ENCODE measurements at regions of chr16 and their contacts with region 1.

Region 1: GRCh38 chr16:88452482-88453216 is 431 bp upstream of the ZFPM1 start:
- DNase-seq: peak; percentile 96
- H3K4me3 ChIP-seq: peak overlapping the region; percentile 68
- H3K27ac ChIP-seq: peak overlapping the region; percentile 42
- H3K4me1 ChIP-seq: peaks cover 56% of the 10 kb centered on the region
- CTCF ChIP-seq: no peak

Region 2: DNA sequence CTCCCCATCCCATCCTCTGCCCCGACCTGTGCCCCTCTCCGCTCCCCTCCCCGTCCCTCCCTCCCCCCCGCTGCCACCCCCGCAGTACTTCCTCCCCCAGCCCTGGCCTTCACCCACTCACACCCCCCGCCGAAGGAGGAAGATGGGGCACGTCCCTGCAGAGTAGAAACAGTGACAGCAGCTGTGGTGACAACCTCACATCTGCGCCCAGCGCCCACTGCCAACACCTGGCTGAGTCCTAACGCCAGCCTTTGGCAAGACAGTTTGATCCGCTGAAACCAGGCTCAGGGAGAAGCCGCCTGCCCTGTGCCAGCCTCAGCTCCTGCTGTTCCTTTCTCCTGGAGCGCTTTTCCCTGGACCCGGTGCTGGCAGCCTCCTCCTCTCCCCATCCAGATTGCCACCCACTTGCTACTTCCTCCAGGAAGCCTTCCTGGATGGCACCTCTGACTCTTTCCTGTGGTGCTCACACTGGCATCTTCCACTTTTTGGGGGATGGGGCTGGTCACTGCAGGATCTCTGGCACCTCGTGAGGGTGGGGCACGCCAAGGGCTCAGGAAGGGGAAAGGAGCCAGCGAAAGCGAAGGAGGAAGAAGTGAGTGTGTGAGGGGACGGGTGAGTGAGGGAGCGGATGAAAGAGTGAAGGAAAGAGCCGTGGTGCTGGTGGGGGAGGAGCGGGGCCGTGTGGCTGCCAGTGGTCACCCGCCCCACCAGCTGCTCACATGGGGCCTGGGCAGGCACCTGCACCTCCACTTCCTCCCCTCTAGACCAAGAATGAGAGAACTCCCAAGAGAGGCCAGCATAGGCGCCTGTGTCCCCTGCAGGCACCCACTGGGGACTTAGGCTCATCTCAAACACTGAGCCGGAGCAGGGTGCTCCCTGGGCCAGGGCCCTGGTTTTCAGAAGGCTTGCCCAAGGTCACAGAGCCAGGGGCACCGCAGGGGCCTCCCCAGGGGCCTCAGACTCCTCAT is 27.4 kb after region 1 on chr16:
- CTCF ChIA-PET with region 1: interaction called, 3 read pairs
- POLR2A ChIA-PET with region 1: interaction called, 4 read pairs
- intact Hi-C with region 1: loop called (anchors 1 kb)
- DNase-seq: peak; percentile 78
- H3K4me3 ChIP-seq: peak overlapping the region; percentile 36
- H3K27ac ChIP-seq: peak overlapping the region; percentile 47
- H3K4me1 ChIP-seq: peaks cover 54% of the 10 kb centered on the region
- CTCF ChIP-seq: no peak

Region 3: GRCh38 chr16:88505405-88506082 is 52.9 kb after region 1 on chr16:
- CTCF ChIA-PET with region 1: no interaction called
- POLR2A ChIA-PET with region 1: no interaction called
- intact Hi-C with region 1: loop called (anchors 1 kb)
- DNase-seq: peak; percentile 79
- H3K4me3 ChIP-seq: no peak overlapping the region
- H3K27ac ChIP-seq: no peak overlapping the region
- H3K4me1 ChIP-seq: peaks cover 12% of the 10 kb centered on the region
- CTCF ChIP-seq: peak; percentile 76

Region 4: DNA sequence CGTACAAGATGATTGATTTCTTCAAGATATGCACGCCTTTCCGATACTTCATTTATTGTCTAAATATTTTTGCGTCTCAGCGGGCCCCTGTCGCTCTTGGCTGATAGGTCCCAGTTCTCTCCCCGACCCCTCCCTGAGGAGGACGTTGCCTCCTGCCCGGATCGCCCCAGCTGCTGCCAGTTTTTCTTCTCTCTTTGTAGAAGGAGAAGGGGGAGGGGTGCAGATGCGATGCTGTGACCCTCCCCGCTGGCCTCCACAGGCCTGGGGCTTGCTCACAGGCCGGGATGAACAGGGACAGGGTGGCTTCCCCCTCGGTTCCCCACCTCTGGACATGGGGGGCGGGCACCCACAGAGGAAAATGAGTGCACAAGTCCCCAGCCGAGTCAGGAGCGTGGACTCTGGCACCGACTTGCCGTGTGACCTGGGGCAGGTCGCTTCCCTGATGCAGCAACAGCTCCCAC is 64.0 kb after region 1 on chr16:
- CTCF ChIA-PET with region 1: no interaction called
- POLR2A ChIA-PET with region 1: no interaction called
- intact Hi-C with region 1: no loop called
- DNase-seq: no peak
- H3K4me3 ChIP-seq: no peak overlapping the region
- H3K27ac ChIP-seq: no peak overlapping the region
- H3K4me1 ChIP-seq: no peaks in the 10 kb centered on the region
- CTCF ChIP-seq: no peak

Region 5: DNA sequence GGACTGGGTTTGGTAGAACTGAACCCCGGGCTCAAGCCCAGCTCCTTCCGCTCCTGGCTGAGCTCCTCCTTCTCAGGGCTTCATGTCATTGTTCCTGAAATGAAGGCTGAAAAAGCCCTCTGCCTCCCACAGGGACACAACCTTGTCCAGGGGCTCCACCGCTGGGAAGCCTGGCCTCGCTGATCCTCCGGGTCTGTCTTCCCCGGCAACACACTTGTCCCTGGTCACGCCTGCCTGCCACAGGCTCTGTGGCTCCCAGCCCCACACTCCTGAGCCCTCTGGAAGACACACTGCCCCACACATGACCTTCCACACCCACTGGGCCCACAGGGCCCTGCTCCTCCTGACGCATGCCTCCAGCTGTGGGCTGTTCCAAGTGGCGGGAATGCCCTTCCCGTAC is 99.5 kb after region 1 on chr16:
- CTCF ChIA-PET with region 1: no interaction called
- POLR2A ChIA-PET with region 1: no interaction called
- intact Hi-C with region 1: loop called (anchors 2 kb)
- DNase-seq: peak; percentile 3
- H3K4me3 ChIP-seq: peak overlapping the region; percentile 6
- H3K27ac ChIP-seq: peak overlapping the region; percentile 86
- H3K4me1 ChIP-seq: peaks cover 71% of the 10 kb centered on the region
- CTCF ChIP-seq: no peak

Region 6: GRCh38 chr16:88569985-88570690 is 117.5 kb after region 1 on chr16 and contains the start of gene ZC3H18:
- CTCF ChIA-PET with region 1: interaction called, 4 read pairs
- POLR2A ChIA-PET with region 1: no interaction called
- intact Hi-C with region 1: loop called (anchors 5 kb)
- DNase-seq: peak; percentile 98
- H3K4me3 ChIP-seq: peak within 1 kb of the TSS; percentile 98
- H3K27ac ChIP-seq: peak within 1 kb of the TSS; percentile 48
- H3K4me1 ChIP-seq: peaks cover 22% of the 10 kb centered on the region
- CTCF ChIP-seq: no peak
- total RNA-seq, gene ZC3H18: 22.2 and 26.6 TPM in 2 replicates

Measured in OCI-LY7 (cell line).